ENCODE measurements at regions of chrX and their contacts with region 1.

Region 1: DNA sequence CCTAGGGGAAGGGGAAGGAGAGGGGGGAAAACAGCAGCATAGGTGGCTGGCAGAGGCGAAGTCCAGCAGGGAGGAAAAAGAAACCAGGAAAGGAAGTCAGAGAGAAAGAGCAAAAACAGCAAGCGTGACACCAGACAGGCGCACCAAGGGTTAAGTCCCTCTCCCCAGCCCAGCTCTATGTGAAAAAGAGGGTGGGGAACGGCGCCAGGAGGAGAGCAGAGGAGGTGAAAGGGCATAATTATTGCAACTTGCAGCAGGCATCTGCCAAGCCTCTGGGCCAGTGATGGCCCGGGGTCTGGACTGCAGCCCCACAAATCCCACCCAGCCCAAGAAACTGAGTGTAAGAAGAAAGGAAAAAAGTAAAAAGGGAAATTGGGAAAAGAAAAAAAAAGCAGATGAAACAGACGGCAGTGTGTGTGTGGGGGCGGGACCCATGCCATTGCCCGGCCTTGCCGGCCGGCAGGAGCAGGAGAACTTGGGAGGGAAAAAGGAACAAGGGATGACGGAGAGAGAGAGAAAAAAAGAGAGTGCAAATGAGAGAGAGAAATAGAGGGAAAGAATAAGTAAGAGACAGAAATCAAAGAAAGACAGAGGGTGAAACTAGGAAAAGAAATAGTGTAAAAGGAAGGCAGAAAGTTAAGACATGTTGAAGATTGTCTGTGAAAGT is 14.1 kb upstream of the RHOXF2 start:
- DNase-seq: no peak
- ATAC-seq: peak in 1 of 2 donors; percentile 68

Region 2: GRCh38 chrX:119981286-119982070 is 162.8 kb before region 1 on chrX:
- intact Hi-C with region 1: loop called in 1 of 2 experiments (anchors 10 kb)
- DNase-seq: no peak
- ATAC-seq: no peak

Region 3: GRCh38 chrX:120015145-120016067 is 128.9 kb before region 1 on chrX:
- intact Hi-C with region 1: loop called in 1 of 2 experiments (anchors 10 kb)
- DNase-seq: no peak
- ATAC-seq: peak; percentile 61 to 72

Measured in left cardiac atrium (tissue), 4 donors.